GM12878 (cell line): ENCODE measurements at regions of chr1 and their contacts with region 1.

Region 1: GRCh38 chr1:21289700-21290545 is at the start of gene ECE1:
- DNase-seq: no peak
- ATAC-seq: no peak
- H3K4me3 ChIP-seq: peak within 1 kb of the TSS; percentile 80; the same call in 1 of the 2 replicates
- H3K27ac ChIP-seq: peak within 1 kb of the TSS; percentile 72
- H3K4me1 ChIP-seq: peaks cover 55% of the 10 kb centered on the region
- H3K27me3 ChIP-seq: no peaks in the 10 kb centered on the region
- CTCF ChIP-seq: no peak
- EP300 ChIP-seq: no peak
- POLR2A ChIP-seq: peak; percentile 50
- RAD21 ChIP-seq: no peak
- polyA plus RNA-seq, gene ECE1: 0.97 to 2.4 TPM

Region 2: GRCh38 chr1:21232044-21232443 is 57.9 kb before region 1 on chr1:
- CTCF ChIA-PET with region 1: interaction called, 11 read pairs
- POLR2A ChIA-PET with region 1: no interaction called
- RAD21 ChIA-PET with region 1: no interaction called
- SMC1A ChIA-PET with region 1: interaction called, 3 read pairs
- in situ Hi-C with region 1: no loop called
- intact Hi-C with region 1: no loop called
- DNase-seq: no peak
- ATAC-seq: peak; percentile 77
- H3K4me3 ChIP-seq: no peak overlapping the region
- H3K27ac ChIP-seq: no peak overlapping the region
- H3K4me1 ChIP-seq: no peaks in the 10 kb centered on the region
- H3K27me3 ChIP-seq: no peaks in the 10 kb centered on the region
- CTCF ChIP-seq: peak; percentile 59 to 75 (median 73)
- EP300 ChIP-seq: no peak
- POLR2A ChIP-seq: no peak
- RAD21 ChIP-seq: peak; percentile 82

Region 3: GRCh38 chr1:21255278-21255942 is 34.5 kb before region 1 on chr1:
- CTCF ChIA-PET with region 1: interaction called, 20 read pairs
- POLR2A ChIA-PET with region 1: interaction called, 3 read pairs
- RAD21 ChIA-PET with region 1: interaction called, 15 read pairs
- SMC1A ChIA-PET with region 1: interaction called, 9 read pairs
- in situ Hi-C with region 1: no loop called
- intact Hi-C with region 1: no loop called
- DNase-seq: peak; percentile 23
- ATAC-seq: peak; percentile 98
- H3K4me3 ChIP-seq: no peak overlapping the region
- H3K27ac ChIP-seq: no peak overlapping the region
- H3K4me1 ChIP-seq: no peaks in the 10 kb centered on the region
- H3K27me3 ChIP-seq: no peaks in the 10 kb centered on the region
- CTCF ChIP-seq: peak; percentile 82 to 86 (median 84)
- EP300 ChIP-seq: no peak
- POLR2A ChIP-seq: no peak
- RAD21 ChIP-seq: peak; percentile 98

Region 4: DNA sequence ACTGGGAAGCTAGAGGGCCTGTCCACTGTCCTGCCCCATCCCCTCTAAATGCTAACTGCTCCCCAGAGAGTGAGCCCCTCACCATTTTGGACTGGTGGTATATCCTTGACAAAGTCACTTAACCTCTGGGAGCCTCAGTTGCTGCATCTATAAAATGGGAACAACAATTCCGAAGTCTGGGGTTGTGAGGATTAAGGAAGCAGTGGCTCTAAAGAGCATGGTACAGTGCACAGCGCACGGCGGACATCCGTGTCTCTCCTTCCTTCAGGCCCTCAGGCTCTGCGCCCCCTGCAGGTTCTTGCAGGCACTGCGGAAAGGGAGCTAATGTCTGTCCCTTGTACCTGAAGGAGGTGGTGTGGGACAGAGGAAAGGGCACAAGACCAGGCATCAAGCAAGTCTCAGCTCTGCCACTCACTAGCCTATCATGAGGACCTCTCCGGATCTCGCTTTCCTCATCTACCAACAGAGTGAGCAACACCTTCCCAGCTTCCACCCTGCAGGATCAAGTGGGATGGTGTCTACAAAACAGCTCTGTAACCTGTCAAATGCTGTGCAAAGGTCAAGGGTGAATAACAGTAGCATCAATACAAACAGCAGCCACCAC is 19.7 kb before region 1 on chr1:
- CTCF ChIA-PET with region 1: interaction called, 131 read pairs
- POLR2A ChIA-PET with region 1: no interaction called
- RAD21 ChIA-PET with region 1: interaction called, 16 read pairs
- SMC1A ChIA-PET with region 1: interaction called, 10 read pairs
- in situ Hi-C with region 1: no loop called
- intact Hi-C with region 1: no loop called
- DNase-seq: peak; percentile 13
- ATAC-seq: peak; percentile 97
- H3K4me3 ChIP-seq: no peak overlapping the region
- H3K27ac ChIP-seq: no peak overlapping the region
- H3K4me1 ChIP-seq: no peaks in the 10 kb centered on the region
- H3K27me3 ChIP-seq: no peaks in the 10 kb centered on the region
- CTCF ChIP-seq: peak; percentile 93 to 99 (median 95)
- EP300 ChIP-seq: no peak
- POLR2A ChIP-seq: no peak
- RAD21 ChIP-seq: peak; percentile 58

Region 5: DNA sequence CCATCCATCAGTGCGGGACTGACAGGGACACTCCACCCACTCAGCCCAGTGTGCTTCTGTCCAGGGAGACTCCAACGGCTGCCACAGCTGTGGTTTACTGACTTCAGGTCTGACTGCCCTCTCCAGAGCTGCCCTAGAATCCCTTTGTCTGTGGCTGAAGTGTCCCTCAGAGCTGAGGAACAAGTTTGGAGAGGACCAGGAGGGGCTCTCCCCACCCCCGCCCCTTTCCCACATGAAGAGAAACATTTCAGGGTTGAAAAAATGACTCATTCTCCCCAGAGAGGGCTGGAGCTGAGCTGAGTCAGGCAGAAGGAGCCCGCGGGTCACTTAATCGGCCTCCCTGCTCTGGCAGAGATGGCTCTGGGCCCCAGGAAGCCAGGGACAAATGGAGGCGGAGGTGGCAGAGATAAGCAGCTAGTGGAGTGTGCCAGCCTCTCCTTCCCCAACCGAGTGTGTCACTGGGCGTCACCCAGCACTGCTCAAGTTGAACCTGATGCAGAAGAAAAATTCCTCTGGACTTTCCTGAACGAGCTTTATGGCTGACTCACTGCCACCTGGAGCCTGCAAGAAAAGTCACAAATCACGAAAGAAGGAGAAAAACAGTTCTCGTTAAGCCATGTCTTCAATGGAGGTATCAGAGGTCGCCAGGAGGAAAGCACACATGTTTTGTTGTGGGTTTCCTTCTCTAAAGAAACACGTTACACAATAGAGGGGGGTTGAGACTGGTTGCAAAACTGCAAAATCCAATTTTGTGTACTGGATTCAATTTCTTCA is 34.6 kb after region 1 on chr1:
- CTCF ChIA-PET with region 1: interaction called, 59 read pairs
- POLR2A ChIA-PET with region 1: interaction called, 71 read pairs
- RAD21 ChIA-PET with region 1: interaction called, 97 read pairs
- SMC1A ChIA-PET with region 1: interaction called, 123 read pairs
- in situ Hi-C with region 1: no loop called
- intact Hi-C with region 1: loop called (anchors 1 kb)
- DNase-seq: peak; percentile 41
- ATAC-seq: peak; percentile 83
- H3K4me3 ChIP-seq: 0 out of 2 replicates have a peak overlapping the region, but pooled peaks have one; percentile 4
- H3K27ac ChIP-seq: peak overlapping the region; percentile 40
- H3K4me1 ChIP-seq: peaks cover 36% of the 10 kb centered on the region
- H3K27me3 ChIP-seq: no peaks in the 10 kb centered on the region
- CTCF ChIP-seq: no peak
- EP300 ChIP-seq: no peak
- POLR2A ChIP-seq: no peak
- RAD21 ChIP-seq: no peak

Region 6: DNA sequence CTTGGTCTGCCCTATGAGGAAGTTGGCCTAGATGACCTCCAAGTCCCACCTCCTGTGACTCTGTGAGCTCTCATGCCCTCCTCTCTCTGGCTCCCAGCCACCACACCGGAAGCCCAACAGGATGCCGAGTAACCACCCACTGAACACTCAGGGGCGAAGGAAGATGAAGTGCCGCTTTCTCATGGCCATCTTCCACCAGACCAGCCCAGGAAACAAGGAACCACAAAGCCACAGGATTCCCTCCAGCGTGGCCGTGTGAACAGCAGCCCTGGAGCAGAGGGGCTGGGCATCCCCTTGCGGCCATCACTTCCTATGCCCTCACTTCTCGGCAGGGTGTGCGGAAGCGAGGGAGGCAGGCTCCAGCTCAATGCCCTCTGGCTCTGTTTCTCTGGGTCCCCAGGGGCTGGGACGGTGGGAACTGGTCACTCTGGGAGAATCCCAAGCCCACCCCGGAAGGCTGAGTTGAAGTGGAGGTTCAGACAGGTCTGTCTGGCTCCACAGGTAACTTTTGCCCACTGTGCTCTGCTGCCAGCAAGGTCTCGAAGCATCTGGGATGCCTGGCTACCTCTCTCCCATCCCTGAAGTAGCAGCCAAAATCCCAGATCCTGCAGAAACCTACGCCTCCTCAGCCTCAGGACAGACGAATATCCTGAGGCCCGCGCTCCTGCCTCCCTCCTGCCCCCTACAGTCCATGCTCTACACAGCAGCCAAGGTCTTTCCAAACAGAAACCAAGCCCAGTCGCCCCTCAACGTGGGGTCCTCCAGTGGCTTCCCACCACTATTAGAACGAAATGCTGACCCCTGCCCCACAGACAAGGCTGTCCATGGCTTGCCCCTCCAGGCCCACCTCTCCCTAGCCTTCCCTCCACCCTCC is 44.5 kb after region 1 on chr1:
- CTCF ChIA-PET with region 1: interaction called, 80 read pairs
- POLR2A ChIA-PET with region 1: interaction called, 88 read pairs
- RAD21 ChIA-PET with region 1: interaction called, 81 read pairs
- SMC1A ChIA-PET with region 1: interaction called, 123 read pairs
- in situ Hi-C with region 1: no loop called
- intact Hi-C with region 1: loop called (anchors 1 kb)
- DNase-seq: peak; percentile 91
- ATAC-seq: peak; percentile 92
- H3K4me3 ChIP-seq: peak overlapping the region; percentile 55; the same call in 1 of the 2 replicates
- H3K27ac ChIP-seq: peak overlapping the region; percentile 87
- H3K4me1 ChIP-seq: peaks cover 46% of the 10 kb centered on the region
- H3K27me3 ChIP-seq: no peaks in the 10 kb centered on the region
- CTCF ChIP-seq: peak; percentile 72 to 87 (median 76)
- EP300 ChIP-seq: peak in 1 of 2 experiments; percentile 11; a peak in 1 of 4 replicates
- POLR2A ChIP-seq: peak; percentile 56
- RAD21 ChIP-seq: peak; percentile 63

Region 7: DNA sequence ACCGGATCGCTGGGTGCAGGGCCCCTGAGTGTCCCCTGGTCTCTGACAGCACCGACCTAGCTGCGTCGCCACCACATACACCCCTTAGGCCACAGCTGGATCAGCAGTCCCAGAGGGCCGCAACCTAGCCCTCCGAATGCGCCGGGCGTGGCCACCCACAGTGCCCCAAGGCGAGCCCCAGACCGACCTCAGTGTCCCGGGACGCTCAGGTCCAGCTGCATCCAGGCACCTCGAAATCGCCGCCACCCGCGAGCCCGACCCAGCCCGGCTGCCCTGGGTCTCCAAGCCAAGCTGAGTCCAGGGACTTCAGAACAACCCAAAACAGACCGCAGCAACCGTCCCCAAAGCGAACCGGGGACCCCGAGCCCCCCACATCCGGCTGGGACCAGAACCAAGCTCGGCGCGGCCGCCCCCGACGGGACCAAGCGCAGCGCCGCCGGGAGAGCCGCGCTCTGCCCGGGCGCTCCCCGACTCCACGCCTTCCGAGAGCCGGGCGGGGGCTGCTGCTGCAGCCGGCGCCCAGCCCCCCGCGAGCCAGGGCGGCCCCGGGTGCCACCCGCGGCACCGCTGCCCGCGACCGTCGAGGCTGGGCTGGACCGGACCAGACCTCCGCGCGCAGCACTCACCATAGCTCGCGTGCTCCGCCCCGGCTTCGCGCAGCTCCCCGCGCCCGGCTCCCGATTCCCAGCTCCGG is 55.0 kb after region 1 on chr1:
- CTCF ChIA-PET with region 1: interaction called, 80 read pairs
- POLR2A ChIA-PET with region 1: interaction called, 58 read pairs
- RAD21 ChIA-PET with region 1: interaction called, 43 read pairs
- SMC1A ChIA-PET with region 1: interaction called, 12 read pairs
- in situ Hi-C with region 1: no loop called
- intact Hi-C with region 1: loop called (anchors 1 kb)
- DNase-seq: no peak
- ATAC-seq: peak; percentile 19
- H3K4me3 ChIP-seq: peak overlapping the region; percentile 98
- H3K27ac ChIP-seq: peak overlapping the region; percentile 43; the same call in 1 of the 2 replicates
- H3K4me1 ChIP-seq: peaks cover 34% of the 10 kb centered on the region
- H3K27me3 ChIP-seq: peaks cover 0 to 2% of the 10 kb centered on the region in 2 experiments; a peak in 1 of 4 replicates
- CTCF ChIP-seq: no peak
- EP300 ChIP-seq: no peak
- POLR2A ChIP-seq: no peak
- RAD21 ChIP-seq: no peak